Psoas muscle (tissue), 8 donors: ENCODE measurements at regions of chr12 and their contacts with region 1.

Region 1: GRCh38 chr12:124036674-124037109 is 63.7 kb downstream of the ZNF664 start:
- DNase-seq: peak in 1 of 2 donors; percentile 36
- ATAC-seq: peak; percentile 30 to 75 (median 58)
- H3K4me3 ChIP-seq: no peak overlapping the region
- H3K27ac ChIP-seq: no peak overlapping the region
- H3K4me1 ChIP-seq: peaks cover 3% of the 10 kb centered on the region
- H3K27me3 ChIP-seq: no peaks in the 10 kb centered on the region
- CTCF ChIP-seq: peak; percentile 95

Region 2: DNA sequence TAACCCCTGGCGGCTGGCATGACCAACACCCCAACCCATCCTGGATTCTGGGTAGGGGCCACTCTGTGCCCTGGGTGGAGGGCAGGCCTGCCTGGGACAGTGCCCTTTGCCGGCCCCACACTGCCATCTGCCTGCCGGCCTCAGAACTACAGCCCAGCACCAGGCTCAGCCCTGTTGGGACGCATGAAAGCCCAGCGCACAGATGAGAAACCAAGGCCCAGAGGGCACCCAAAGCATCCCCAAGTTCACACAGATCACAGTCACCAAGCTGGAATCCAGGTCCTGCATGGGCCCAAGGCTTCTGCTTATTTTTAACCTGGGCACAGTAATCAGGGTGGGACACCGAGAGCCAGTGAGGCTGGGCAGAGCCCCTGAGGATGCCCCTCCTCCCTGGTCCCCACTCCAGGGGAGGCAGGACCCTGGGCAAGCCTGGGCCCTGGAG is 284.4 kb after region 1 on chr12:
- intact Hi-C with region 1: loop called (anchors 2 to 5 kb)
- DNase-seq: peak; percentile 63 to 85
- ATAC-seq: peak; percentile 77 to 86 (median 82)
- H3K4me3 ChIP-seq: no peak overlapping the region
- H3K27ac ChIP-seq: no peak overlapping the region
- H3K4me1 ChIP-seq: no peaks in the 10 kb centered on the region
- H3K27me3 ChIP-seq: no peaks in the 10 kb centered on the region
- CTCF ChIP-seq: peak; percentile 91

Region 3: DNA sequence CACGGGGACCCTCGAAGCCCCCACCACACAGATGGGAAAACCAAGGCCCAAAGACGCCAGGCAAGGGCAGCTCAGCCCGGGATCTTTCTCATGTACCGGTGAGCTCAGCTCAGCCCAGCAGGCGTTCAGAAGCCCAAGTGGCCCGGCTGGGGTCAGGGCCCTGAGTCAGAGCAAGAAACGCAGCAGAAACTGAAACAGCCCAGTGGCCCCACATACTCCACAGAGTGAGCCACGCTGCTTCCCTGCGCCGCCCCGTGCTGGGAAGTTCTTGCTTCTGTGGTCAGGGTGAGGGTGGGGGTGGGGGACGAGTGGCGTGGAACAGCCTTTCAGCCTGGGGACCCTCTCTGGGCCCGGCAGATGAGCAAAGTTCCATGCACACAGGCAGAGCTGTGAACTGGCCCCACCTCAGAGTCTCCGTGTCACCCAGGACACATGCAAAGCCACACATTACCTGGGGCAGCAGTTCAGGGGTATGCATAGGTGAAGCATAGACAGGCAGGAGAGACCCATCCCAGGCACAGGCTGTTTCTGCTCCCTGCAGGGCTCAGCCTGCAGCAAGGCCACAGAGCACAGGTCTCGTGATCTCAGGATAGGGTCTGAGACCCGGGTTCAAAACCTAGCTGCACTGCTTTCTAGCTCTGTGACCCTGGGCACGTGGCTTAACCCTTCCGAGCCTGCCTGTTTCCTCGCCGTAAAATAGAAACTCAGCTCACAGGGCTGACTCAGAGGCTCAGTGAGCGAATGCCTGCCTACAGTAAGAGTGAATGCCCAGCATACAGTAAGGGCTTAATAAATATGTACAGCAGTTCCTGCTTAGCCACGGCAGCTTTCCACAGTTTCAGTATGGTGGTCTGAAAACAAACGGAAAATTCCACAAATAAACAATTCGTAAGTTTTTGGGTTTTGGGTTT is 509.1 kb after region 1 on chr12:
- intact Hi-C with region 1: loop called in 1 of 2 experiments (anchors 10 kb)
- DNase-seq: no peak
- ATAC-seq: no peak
- H3K4me3 ChIP-seq: no peak overlapping the region
- H3K27ac ChIP-seq: no peak overlapping the region
- H3K4me1 ChIP-seq: peaks cover 75% of the 10 kb centered on the region
- H3K27me3 ChIP-seq: no peaks in the 10 kb centered on the region
- CTCF ChIP-seq: no peak

Region 4: GRCh38 chr12:124906606-124907261 is 870.0 kb after region 1 on chr12:
- intact Hi-C with region 1: loop called in 1 of 2 experiments (anchors 5 kb)
- DNase-seq: peak; percentile 66 to 84
- ATAC-seq: peak; percentile 31 to 52 (median 46)
- H3K4me3 ChIP-seq: no peak overlapping the region
- H3K27ac ChIP-seq: peak overlapping the region; percentile 58
- H3K4me1 ChIP-seq: peaks cover 26% of the 10 kb centered on the region
- H3K27me3 ChIP-seq: no peaks in the 10 kb centered on the region
- CTCF ChIP-seq: peak; percentile 96